Dorsolateral prefrontal cortex (tissue), 120 donors: ENCODE measurements at regions of chr11 and their contacts with region 1.

Region 1: GRCh38 chr11:77547863-77548551 is 41.7 kb upstream of the AQP11 start:
- DNase-seq: peak in 3 of 10 donors; percentile 10 to 48 (median 41)
- H3K4me3 ChIP-seq: peak overlapping the region in 6 of 59 donors; percentile 8 to 28 (median 12)
- H3K27ac ChIP-seq: peak overlapping the region in 40 of 59 donors; percentile 3 to 75 (median 49)
- H3K27me3 ChIP-seq: no peaks in the 10 kb centered on the region
- CTCF ChIP-seq: peak; percentile 58 to 95 (median 80)

Region 2: GRCh38 chr11:77127232-77127911 is 420.6 kb before region 1 on chr11:
- intact Hi-C with region 1: loop called (anchors 5 to 10 kb)
- DNase-seq: peak in 9 of 10 donors; percentile 38 to 81 (median 57)
- H3K4me3 ChIP-seq: peak overlapping the region; percentile 22 to 71 (median 56)
- H3K27ac ChIP-seq: peak overlapping the region in 14 of 59 donors; percentile 1 to 72 (median 40)
- H3K27me3 ChIP-seq: no peaks in the 10 kb centered on the region
- CTCF ChIP-seq: peak; percentile 96 to 100 (median 99)

Region 3: GRCh38 chr11:77187776-77188632 is 360.0 kb before region 1 on chr11:
- intact Hi-C with region 1: loop called in 1 of 2 experiments (anchors 5 kb)
- DNase-seq: peak; percentile 76 to 90 (median 84)
- H3K4me3 ChIP-seq: no peak overlapping the region
- H3K27ac ChIP-seq: no peak overlapping the region
- H3K27me3 ChIP-seq: no peaks in the 10 kb centered on the region
- CTCF ChIP-seq: peak; percentile 74 to 96 (median 92)

Region 4: GRCh38 chr11:77197626-77198320 is 350.2 kb before region 1 on chr11:
- intact Hi-C with region 1: loop called (anchors 2 to 5 kb)
- DNase-seq: peak in 5 of 10 donors; percentile 2 to 34 (median 23)
- H3K4me3 ChIP-seq: no peak overlapping the region
- H3K27ac ChIP-seq: no peak overlapping the region
- H3K27me3 ChIP-seq: no peaks in the 10 kb centered on the region
- CTCF ChIP-seq: no peak

Region 5: GRCh38 chr11:77309401-77310085 is 238.5 kb before region 1 on chr11:
- intact Hi-C with region 1: loop called in 1 of 2 experiments (anchors 10 kb)
- DNase-seq: no peak
- H3K4me3 ChIP-seq: no peak overlapping the region
- H3K27ac ChIP-seq: peak overlapping the region in 31 of 59 donors; percentile 12 to 71 (median 48)
- H3K27me3 ChIP-seq: no peaks in the 10 kb centered on the region
- CTCF ChIP-seq: no peak

Region 6: DNA sequence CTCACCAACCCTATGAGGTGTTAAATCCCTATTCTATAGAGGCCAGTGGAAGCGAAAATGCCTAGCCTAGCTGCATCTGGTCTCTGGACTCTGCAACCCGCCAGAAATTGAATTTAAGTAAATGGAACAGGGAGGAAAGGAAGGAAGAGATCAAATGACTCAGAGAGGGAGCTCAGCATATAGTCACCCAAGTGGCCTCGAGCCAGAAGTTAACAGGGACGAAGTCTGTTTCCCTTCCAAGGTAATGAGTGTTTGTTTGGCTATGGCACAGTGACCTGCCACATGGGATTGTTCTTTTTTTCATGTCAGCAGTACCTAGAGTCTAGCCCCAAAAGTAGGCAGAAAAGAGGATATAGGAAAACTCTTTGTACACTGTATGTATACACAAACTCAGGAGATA is 140.4 kb before region 1 on chr11:
- intact Hi-C with region 1: loop called in 1 of 2 experiments (anchors 10 kb)
- DNase-seq: peak in 2 of 10 donors; percentile 54 to 71
- H3K4me3 ChIP-seq: peak overlapping the region in 17 of 59 donors; percentile 0 to 73 (median 25)
- H3K27ac ChIP-seq: peak overlapping the region in 2 of 59 donors; percentile 31 to 59
- H3K27me3 ChIP-seq: no peaks in the 10 kb centered on the region
- CTCF ChIP-seq: no peak

Region 7: DNA sequence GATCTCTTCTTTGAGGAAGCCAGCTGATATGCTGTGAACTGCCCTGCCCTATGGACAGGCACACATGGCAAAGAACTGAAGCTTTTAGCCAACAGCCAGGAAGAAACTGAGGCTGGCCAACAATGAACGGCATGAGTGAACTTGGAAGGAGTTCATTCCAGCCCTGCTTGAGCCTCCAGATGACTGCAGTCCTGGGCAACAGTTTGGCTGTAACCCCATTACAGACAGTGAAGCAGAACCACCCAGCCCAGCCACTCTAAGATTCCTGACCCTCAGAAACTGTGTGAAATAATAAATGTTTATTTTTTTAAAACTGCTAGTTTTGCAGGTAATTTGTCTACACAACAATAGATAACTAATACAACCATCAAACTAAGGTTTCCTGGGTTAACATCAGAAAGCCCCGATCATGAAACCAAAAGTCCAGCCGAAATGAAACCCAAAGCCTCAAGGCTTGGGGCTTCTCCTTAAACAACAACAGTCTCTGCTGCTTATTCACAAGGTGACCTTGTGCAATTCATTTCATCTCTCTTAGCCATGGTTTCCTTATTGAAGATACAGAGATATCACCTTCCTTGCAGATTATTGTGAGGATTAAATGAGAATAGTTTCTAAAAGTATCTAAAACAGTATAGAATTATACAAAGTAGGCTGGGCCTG is 105.5 kb before region 1 on chr11:
- intact Hi-C with region 1: no loop called
- DNase-seq: no peak
- H3K4me3 ChIP-seq: no peak overlapping the region
- H3K27ac ChIP-seq: peak overlapping the region in 8 of 59 donors; percentile 4 to 33 (median 12)
- H3K27me3 ChIP-seq: no peaks in the 10 kb centered on the region
- CTCF ChIP-seq: no peak

Region 8: DNA sequence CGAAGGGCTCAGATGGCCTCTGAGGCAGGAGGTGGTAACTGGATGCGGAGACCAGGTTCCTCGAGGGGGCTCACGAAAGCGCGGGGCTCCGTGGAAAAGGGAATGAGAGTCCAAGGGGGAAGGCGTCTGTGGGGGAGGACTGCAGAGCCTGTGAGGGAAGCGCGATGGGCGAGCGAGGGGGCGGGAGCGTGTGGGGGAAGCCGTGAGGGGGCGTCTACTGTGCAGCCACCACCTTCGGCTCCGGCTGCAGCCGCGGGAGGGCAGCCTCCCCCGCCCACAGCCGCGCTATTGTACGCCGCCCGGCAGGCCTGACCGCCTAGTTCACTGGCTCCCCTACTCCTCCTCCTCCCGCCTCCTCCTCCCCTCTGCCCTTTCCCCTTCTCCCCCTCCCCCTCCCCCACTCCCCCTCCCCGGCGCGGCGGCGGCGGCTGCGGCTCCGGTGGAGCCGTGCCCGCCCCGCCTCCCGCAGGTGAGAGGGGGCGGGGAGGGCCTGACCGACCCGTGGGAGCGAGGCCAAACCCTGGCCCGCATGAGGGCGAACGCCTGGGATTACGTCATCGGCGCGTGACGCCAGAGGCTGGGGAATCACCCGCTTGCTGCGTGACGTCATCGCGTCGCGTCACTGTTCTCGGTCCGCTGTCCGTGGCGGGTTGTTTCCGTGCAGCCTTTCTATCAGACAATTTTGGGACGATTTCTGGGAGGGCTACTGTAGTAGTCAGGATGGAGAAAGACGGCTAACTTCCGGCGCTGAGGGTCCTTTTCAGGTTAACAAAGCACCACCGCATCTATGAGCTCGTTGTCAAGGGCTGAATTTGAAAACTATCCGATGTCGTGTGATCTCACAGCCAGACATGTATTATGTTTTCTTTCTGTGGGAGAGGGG is 74.0 kb before region 1 on chr11 and contains the start of gene PAK1:
- intact Hi-C with region 1: loop called (anchors 2 kb)
- DNase-seq: peak; percentile 59 to 91 (median 82)
- H3K4me3 ChIP-seq: peak within 1 kb of the TSS; percentile 56 to 91 (median 81)
- H3K27ac ChIP-seq: peak within 1 kb of the TSS; percentile 29 to 95 (median 86)
- H3K27me3 ChIP-seq: no peaks in the 10 kb centered on the region
- CTCF ChIP-seq: peak in 47 of 56 donors; percentile 12 to 65 (median 39)
- total RNA-seq, gene PAK1: 77.4 to 424 (median 270) TPM

Region 9: DNA sequence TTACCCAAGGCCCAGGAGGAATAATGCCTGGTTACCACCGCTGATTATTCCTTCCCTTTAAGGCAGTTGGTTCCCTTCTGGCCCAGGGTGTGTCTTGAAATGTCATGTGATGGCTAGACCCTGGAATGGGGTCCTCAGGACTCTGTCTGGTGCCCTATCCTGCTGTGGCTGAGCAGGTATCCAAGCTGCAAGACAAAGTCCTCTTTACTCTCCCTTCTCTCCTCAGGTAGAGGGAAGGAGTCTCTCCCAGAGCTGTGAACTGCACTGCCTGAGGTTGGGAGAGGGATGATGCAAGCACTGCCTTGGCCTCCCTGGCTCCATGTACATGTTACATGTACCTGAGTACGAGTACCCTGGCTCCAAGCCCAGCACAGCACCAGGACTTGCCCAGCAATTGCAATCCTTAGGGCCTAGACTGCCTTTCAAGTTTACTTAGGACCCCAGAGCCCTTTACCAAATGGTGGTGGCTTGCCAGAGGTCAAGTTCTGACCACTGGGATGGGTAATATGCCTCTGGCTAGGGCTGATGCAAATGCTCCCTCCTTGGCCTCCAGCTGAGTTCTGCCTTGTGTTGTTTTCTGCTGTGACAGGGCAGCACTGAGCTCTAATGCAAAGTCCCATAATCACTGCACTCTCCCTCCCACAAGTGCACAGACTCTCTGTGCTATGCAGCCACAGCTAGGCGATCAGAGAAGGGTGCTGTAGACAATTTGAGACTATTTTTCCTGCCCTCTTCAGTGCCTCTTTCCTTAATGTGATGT is 21.1 kb after region 1 on chr11:
- intact Hi-C with region 1: no loop called
- DNase-seq: no peak
- H3K4me3 ChIP-seq: no peak overlapping the region
- H3K27ac ChIP-seq: no peak overlapping the region
- H3K27me3 ChIP-seq: no peaks in the 10 kb centered on the region
- CTCF ChIP-seq: no peak

Region 10: DNA sequence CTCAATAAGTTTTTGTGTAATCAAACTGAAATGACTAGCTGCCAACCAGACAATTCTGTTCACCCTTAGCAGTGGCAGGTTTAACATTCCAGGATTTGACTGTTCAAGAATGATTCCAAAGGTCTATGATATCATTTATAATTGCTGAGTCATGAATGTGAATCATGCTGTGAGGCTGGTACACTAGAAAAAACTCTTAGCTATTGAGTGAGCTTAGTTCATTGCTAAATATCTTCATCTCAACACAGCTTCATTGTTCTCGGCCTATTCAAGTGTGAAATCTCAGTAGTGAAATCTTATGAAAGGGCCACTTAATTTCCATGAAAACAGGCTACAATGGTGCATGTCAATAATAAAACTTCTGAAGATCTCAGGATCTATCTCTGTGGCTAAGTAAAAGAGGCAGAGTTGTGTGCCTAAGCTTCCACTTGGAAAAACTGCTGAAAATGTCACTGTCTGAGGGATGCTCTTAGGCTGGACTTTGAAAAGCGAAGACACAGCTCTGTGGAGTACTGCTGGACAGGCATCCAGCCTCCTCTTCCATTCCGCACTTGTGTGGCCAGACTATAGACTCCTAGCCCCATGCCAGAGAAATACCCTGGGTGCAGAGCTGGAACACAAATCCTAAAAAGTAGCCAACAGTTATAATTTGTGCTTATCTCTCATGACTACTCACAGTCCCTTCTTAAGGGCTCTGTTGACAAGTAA is 54.5 kb after region 1 on chr11:
- intact Hi-C with region 1: no loop called
- DNase-seq: no peak
- H3K4me3 ChIP-seq: peak overlapping the region in 1 of 59 donors; percentile 19
- H3K27ac ChIP-seq: peak overlapping the region in 54 of 59 donors; percentile 4 to 84 (median 59)
- H3K27me3 ChIP-seq: no peaks in the 10 kb centered on the region
- CTCF ChIP-seq: no peak

Region 11: DNA sequence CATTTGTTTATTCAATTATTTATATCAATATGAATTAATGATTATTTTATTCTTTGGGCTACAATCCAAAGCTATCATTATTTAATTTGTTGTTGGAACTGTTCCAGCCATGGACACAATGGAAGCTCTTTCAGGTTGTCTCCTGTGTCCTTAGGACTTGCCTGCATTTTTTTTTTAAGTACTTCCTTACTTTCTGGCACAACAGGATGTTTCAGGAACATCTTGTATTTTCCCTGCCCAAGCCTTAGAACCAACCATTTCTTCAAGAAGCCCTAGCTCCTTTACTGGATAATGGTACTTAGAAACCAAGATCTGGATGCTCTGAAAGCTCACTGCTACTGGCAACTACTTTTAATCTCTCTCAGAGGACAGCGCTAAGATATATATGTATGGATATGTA is 147.4 kb after region 1 on chr11:
- intact Hi-C with region 1: no loop called
- DNase-seq: no peak
- H3K4me3 ChIP-seq: no peak overlapping the region
- H3K27ac ChIP-seq: peak overlapping the region in 2 of 59 donors; percentile 13 to 15
- H3K27me3 ChIP-seq: no peaks in the 10 kb centered on the region
- CTCF ChIP-seq: no peak